Transverse colon (tissue), 4 donors: ENCODE measurements at regions of chr1 and their contacts with region 1.

Region 1: DNA sequence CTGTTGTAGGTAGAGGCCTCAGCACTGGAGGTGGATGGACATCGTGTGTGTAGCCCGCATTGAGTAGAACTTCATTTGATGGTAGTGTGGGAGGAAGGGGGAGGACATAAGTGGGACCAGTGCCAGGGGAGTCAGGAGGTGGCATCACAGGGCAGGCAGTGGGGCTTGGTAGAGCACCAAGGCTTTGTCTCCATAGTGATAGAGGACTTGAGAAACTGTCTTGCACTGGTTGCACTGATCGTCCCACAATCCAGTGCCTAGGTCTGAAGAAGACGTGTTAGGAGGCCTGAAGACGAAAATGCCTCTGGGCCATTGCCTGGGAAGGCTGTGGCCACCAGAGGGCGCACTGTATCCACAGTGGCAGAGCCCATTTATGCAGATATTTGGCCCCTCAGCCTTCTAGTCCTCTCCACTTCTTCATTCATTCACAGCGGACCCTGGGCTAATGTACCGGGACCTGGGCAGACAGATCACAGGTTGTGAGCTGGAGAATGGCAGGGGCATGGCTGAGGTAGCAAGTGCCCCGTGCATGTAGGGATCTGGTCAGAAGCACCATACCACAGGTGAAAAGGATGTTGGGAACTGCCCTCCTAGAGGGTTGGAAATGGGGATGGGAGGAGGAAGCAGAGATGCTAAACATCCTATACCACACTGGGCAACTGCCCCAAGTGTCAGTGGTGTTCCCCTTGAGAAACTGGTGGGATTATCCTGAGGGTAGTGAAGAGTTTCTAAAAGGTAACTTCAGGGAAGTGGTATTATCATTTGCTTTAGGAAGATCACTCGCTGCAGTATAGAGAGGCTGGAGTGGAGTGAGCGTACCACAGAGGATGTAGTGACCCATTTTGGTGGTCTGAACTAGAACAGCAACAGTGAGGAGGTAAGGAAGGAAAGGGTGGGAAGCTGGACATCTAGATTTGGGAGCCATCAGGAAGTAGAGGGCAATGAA is 95.3 kb downstream of the PIK3R3 start:
- DNase-seq: peak; percentile 90
- H3K4me3 ChIP-seq: no peak overlapping the region
- H3K27ac ChIP-seq: no peak overlapping the region
- H3K4me1 ChIP-seq: peaks cover 0 to 34% (median 3%) of the 10 kb centered on the region in 4 donors
- H3K27me3 ChIP-seq: no peaks in the 10 kb centered on the region
- CTCF ChIP-seq: peak; percentile 97 to 98 (median 98)
- EP300 ChIP-seq: no peak
- POLR2A ChIP-seq: no peak

Region 2: DNA sequence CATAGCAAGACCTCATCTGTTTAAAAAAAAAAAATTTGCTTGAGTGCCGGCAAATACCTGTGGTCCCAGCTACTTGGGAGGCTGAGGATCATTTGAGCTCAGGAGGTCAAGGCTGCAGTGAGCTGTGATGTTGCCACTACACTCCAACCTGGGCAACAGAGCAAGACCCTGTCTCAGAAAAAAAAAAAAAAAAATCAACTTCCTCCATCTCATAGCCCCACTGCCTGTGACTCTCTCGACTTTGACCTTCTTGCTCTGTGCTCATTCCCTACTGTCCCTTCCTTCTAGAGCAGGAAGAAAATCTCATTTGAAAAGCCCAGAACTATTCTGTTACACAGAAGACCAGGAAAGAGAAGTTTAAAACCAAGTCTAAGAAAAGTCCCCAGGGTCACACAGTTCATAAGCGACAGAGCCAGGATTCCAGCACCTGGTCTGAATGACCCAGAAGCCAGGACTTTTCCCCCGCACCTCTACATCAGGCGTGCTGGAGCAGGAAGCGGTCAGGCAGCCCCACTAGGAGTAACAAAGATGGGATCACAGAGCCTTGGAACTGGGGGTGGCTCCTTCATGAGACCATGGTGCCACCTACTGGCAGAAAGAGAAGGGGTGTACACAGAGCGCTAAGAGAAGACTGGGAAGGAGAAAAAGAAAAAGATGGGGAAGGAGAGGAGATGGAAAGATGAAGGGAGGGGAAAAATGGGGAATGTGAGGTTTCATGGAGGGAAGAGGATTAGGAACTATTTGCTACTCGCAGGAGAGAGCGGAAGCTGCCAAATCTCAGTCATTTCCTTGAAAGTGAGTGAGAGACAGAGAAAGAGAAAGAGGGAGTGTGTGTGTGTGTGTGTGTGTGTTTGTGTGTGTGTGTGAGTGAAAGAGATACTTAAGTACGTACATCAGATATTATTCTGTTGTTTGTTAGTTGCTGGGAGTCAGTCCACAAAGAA is 142.2 kb after region 1 on chr1:
- in situ Hi-C with region 1: loop called in 3 of 4 experiments (anchors 5 kb)
- intact Hi-C with region 1: loop called (anchors 1 kb)
- DNase-seq: peak; percentile 88
- H3K4me3 ChIP-seq: peak overlapping the region in 1 of 4 donors; percentile 10
- H3K27ac ChIP-seq: peak overlapping the region; percentile 86 to 91 (median 88)
- H3K4me1 ChIP-seq: peaks cover 5 to 40% (median 29%) of the 10 kb centered on the region in 4 donors
- H3K27me3 ChIP-seq: no peaks in the 10 kb centered on the region
- CTCF ChIP-seq: peak; percentile 85 to 98 (median 88)
- EP300 ChIP-seq: no peak
- POLR2A ChIP-seq: no peak

Region 3: DNA sequence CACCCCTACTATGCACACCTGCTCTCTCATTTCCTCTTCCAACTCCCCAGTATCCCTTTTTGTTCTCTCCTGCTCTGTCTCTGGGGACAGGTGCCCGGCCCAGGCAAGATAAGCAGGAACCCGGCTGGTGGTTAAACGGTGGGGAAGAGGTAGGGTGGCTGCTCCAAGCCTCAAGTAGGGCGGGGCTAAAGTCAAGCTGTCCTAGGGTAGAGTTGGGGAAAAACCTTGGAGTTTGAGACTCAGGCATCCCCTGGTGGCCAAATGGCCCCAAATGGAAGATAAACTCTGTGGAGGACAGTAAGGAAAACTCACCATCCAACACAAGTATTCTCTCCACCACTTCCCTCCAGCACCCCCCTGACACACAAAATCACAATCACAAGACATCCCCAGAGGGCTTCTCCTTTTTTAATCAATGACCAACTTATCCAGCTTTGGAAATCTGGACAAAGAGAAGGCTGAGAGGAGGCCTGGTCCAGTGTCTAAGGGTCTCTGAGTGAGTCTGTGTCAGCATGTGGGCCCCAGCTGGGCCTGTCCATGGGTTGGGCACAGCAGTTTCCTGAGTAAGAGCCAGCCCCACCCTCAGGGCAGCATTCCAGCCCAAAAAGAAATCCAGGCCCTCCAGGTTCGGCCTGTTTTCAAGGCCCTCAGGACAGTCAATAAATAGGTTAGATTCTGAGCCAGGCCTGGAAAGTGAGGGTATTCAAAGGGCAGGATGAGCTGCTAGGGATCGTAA is 151.3 kb after region 1 on chr1:
- in situ Hi-C with region 1: loop called in 1 of 4 experiments (anchors 5 kb)
- intact Hi-C with region 1: no loop called
- DNase-seq: peak; percentile 55
- H3K4me3 ChIP-seq: no peak overlapping the region
- H3K27ac ChIP-seq: peak overlapping the region; percentile 78 to 87 (median 86)
- H3K4me1 ChIP-seq: peaks cover 9 to 52% (median 35%) of the 10 kb centered on the region in 4 donors
- H3K27me3 ChIP-seq: no peaks in the 10 kb centered on the region
- CTCF ChIP-seq: peak in 2 of 5 experiments; percentile 26 to 38
- EP300 ChIP-seq: no peak
- POLR2A ChIP-seq: no peak

Region 4: GRCh38 chr1:47554901-47555300 is 1517.7 kb after region 1 on chr1:
- in situ Hi-C with region 1: no loop called
- intact Hi-C with region 1: loop called (anchors 5 kb)
- DNase-seq: no peak
- H3K4me3 ChIP-seq: no peak overlapping the region
- H3K27ac ChIP-seq: peak overlapping the region; percentile 66 to 74 (median 73)
- H3K4me1 ChIP-seq: peaks cover 8 to 44% (median 32%) of the 10 kb centered on the region in 4 donors
- H3K27me3 ChIP-seq: peaks cover 2% of the 10 kb centered on the region
- CTCF ChIP-seq: no peak
- EP300 ChIP-seq: no peak
- POLR2A ChIP-seq: no peak